ENCODE measurements at regions of chr12 and their contacts with region 1.

Region 1: DNA sequence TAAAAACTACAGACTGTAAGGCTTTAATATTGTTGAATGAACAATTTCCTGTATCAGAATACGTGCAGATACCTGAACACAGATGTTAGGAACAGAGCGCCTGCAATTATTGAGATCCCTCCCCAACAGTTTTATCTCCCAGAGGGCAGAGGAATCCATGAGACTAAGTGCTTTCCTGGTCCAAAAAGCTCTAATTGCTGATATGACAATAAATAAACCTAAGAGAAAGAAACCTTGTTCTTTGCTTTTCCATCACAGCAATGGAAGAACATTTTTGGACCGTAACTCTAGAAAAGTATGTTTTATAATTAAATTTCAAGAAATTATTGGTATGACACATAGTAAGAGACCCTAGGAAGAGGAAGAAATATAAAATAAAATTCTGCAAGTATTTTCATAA is 13.0 kb upstream of the KRT83 start:
- DNase-seq: no peak
- H3K4me3 ChIP-seq: no peak overlapping the region
- H3K27ac ChIP-seq: no peak overlapping the region
- H3K4me1 ChIP-seq: no peaks in the 10 kb centered on the region
- H3K27me3 ChIP-seq: no peaks in the 10 kb centered on the region
- CTCF ChIP-seq: no peak

Region 2: GRCh38 chr12:51806896-51807295 is 527.3 kb before region 1 on chr12:
- CTCF ChIA-PET with region 1: no interaction called
- POLR2A ChIA-PET with region 1: no interaction called
- intact Hi-C with region 1: no loop called
- DNase-seq: no peak
- H3K4me3 ChIP-seq: no peak overlapping the region
- H3K27ac ChIP-seq: no peak overlapping the region
- H3K4me1 ChIP-seq: no peaks in the 10 kb centered on the region
- H3K27me3 ChIP-seq: no peaks in the 10 kb centered on the region
- CTCF ChIP-seq: no peak

Region 3: DNA sequence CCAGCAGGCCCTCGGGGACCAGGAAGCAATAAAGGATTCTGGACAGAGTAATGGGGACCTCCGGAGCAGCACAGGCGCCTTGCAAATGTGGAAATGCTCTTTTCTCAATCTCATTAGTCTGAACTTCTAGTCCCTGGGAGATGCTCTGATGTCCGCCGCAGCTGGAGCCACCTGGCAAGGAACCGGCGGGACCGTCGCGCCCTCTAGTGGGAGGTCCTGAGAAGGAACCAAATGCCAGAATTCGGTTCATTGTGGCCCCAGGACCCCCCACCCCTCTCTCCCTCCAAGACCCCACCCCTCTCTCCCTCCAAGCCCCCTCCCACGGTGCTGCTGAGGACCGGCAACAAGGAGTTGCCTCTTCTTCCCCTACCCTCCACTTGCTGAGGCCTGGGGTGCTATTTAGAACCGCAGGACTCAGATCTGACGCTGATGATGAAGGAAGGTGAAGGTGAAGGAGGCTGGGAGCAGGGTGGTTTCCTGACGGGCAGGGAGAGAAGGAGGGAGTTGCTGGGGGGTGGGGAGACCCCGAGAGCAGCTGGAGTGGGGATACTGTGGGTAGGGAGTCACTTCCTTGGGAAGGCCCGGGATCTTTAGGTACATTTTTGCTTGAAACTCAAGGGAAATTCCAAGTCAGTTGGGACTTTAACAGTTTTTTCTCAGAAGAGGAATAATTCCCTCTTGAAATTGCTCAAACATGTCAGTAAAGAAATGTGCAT is 212.2 kb before region 1 on chr12:
- CTCF ChIA-PET with region 1: interaction called, 16 read pairs
- POLR2A ChIA-PET with region 1: no interaction called
- intact Hi-C with region 1: no loop called
- DNase-seq: peak; percentile 81
- H3K4me3 ChIP-seq: no peak overlapping the region
- H3K27ac ChIP-seq: no peak overlapping the region
- H3K4me1 ChIP-seq: peaks cover 8% of the 10 kb centered on the region
- H3K27me3 ChIP-seq: no peaks in the 10 kb centered on the region
- CTCF ChIP-seq: peak; percentile 86

Region 4: GRCh38 chr12:52268212-52268611 is 66.0 kb before region 1 on chr12:
- CTCF ChIA-PET with region 1: no interaction called
- POLR2A ChIA-PET with region 1: no interaction called
- intact Hi-C with region 1: no loop called
- DNase-seq: no peak
- H3K4me3 ChIP-seq: no peak overlapping the region
- H3K27ac ChIP-seq: no peak overlapping the region
- H3K4me1 ChIP-seq: no peaks in the 10 kb centered on the region
- H3K27me3 ChIP-seq: peaks cover 5% of the 10 kb centered on the region
- CTCF ChIP-seq: no peak

Region 5: GRCh38 chr12:52741392-52742195 is 407.4 kb after region 1 on chr12:
- CTCF ChIA-PET with region 1: no interaction called
- POLR2A ChIA-PET with region 1: no interaction called
- intact Hi-C with region 1: no loop called
- DNase-seq: peak; percentile 81
- H3K4me3 ChIP-seq: no peak overlapping the region
- H3K27ac ChIP-seq: no peak overlapping the region
- H3K4me1 ChIP-seq: peaks cover 23% of the 10 kb centered on the region
- H3K27me3 ChIP-seq: no peaks in the 10 kb centered on the region
- CTCF ChIP-seq: no peak

Region 6: GRCh38 chr12:53543539-53543938 is 1209.4 kb after region 1 on chr12:
- CTCF ChIA-PET with region 1: no interaction called
- POLR2A ChIA-PET with region 1: no interaction called
- intact Hi-C with region 1: no loop called
- DNase-seq: peak; percentile 83
- H3K4me3 ChIP-seq: no peak overlapping the region
- H3K27ac ChIP-seq: peak overlapping the region; percentile 62
- H3K4me1 ChIP-seq: peaks cover 14% of the 10 kb centered on the region
- H3K27me3 ChIP-seq: no peaks in the 10 kb centered on the region
- CTCF ChIP-seq: peak; percentile 93

Measured in A673 (cell line).